ENCODE measurements at regions of chr17 and their contacts with region 1.

Region 1: DNA sequence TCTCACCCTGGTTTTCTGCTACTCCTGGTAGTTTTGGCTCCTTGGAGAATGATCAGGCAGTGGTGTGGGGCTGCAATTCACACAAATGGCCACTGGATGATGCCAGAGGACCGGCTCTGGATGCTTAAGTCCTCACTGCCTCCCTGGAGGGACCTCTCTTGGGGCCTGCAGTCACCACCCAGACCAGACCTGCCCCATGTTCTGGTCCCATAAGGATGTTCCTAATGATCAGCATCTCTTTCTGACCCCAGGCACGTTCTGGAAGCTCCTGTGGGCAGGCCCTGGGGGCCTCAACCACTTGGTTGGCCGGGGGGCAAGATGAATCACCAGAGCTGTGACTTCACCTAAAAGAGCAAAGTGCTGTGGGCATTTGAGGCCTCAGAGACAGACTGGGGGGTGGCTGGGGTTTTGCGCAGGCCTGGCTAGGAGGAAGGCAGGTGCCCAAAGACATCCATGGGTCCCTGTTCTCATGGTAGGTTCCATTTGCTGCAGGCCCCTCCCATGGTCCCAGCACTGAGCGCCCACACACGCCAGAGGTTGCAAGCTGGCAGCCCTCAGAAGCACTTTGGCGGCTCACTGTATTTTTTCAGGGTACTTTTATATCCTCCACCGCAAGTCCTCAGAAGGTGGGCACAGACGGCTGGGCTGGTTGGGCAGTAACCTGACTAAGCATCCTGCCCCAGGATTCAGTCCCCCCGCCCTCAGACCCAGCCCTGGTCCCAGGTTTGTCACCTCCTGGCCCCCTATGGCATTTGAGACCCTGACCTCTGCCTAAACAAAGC is 53.2 kb downstream of the NT5M start:
- DNase-seq: no peak
- H3K4me3 ChIP-seq: no peak overlapping the region
- H3K27ac ChIP-seq: no peak overlapping the region
- H3K4me1 ChIP-seq: peaks cover 7 to 21% (median 14%) of the 10 kb centered on the region in 4 donors
- H3K27me3 ChIP-seq: peaks cover 0 to 39% (median 2%) of the 10 kb centered on the region in 4 donors
- CTCF ChIP-seq: peak; percentile 96 to 98 (median 98)
- EP300 ChIP-seq: no peak
- POLR2A ChIP-seq: no peak

Region 2: DNA sequence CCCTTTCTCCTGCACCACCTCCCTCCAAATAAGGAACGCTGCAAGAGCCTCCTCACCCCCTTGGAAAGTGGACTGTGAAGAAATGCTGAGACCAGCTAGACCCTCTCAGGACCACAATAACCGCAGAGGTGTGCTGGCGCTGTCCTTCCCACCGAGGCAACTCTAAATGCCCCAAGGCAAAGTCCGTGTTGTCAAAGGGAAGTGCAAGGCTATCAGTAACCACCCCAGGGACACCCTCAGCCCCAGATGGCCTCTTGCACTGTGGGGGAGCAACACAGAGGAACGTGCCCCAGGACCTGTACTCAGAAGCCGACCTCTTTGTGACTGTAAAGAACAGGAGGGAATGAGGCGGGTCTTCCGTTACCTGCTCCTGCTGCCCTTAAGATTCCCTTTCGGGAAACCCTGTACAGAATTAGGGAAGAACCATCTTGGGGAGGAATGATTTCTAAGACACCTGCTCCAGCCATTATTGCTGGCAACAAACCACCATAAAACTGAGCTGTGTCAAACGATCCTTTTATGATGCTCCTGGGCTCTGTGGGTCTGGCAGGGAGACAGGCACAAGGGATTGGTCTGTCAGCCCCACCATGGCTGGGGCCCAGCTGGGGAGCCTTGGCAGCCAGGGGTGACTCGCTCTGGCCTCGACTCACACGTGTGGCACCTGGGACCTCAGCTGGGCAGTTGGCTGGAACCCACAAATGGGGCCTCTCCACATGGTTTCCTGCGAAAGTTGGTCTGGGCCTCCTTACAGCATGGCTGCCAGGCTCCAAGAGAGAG is 105.9 kb after region 1 on chr17:
- intact Hi-C with region 1: no loop called
- DNase-seq: no peak
- H3K4me3 ChIP-seq: no peak overlapping the region
- H3K27ac ChIP-seq: no peak overlapping the region
- H3K4me1 ChIP-seq: no peaks in the 10 kb centered on the region
- H3K27me3 ChIP-seq: peaks cover 0 to 23% (median 0%) of the 10 kb centered on the region in 4 donors
- CTCF ChIP-seq: no peak
- EP300 ChIP-seq: no peak
- POLR2A ChIP-seq: no peak

Region 3: GRCh38 chr17:17570140-17570797 is 213.9 kb after region 1 on chr17:
- intact Hi-C with region 1: loop called (anchors 5 kb)
- DNase-seq: no peak
- H3K4me3 ChIP-seq: no peak overlapping the region
- H3K27ac ChIP-seq: no peak overlapping the region
- H3K4me1 ChIP-seq: peaks cover 28 to 44% (median 33%) of the 10 kb centered on the region in 4 donors
- H3K27me3 ChIP-seq: no peaks in the 10 kb centered on the region
- CTCF ChIP-seq: peak; percentile 10 to 15 (median 11)
- EP300 ChIP-seq: no peak
- POLR2A ChIP-seq: no peak

Region 4: DNA sequence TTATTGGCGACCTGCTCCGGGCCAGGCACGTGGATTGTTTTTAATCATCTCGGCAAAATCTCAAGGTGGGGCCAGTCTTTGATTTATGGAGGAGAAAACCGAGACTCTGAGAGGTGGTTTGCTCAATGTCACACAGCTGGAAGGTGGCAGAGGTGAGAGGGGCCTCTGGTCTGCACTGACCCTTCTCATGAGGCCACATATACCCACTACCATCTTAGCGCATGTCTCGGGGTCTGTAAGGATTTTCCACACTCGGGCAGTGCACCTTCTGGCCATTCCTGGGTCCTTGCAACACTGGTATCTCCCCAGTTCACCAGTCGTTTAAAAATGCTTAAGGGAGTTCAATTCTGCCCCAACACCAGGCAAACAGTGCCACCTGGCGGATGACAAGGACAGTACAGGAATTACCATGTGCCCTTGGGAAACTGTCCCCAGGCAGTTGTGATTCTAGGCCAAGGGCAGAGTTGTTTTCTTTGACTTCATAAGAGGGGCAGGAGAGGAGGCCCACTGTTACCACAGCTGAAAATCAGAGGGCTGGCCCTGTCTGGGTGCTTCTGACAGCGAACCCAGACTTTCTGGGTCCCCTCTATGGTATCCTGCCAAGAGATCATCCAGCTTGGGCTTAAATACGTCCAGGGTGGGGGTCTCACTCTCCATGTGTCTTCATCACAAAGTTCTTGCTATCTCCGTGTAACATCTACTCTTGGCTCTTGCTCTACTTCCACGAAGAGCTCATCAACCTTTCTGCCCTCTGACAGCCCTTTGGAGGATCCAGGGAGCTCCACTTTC is 285.5 kb after region 1 on chr17:
- intact Hi-C with region 1: loop called (anchors 1 kb)
- DNase-seq: peak; percentile 93
- H3K4me3 ChIP-seq: no peak overlapping the region
- H3K27ac ChIP-seq: no peak overlapping the region
- H3K4me1 ChIP-seq: peaks cover 0 to 6% (median 0%) of the 10 kb centered on the region in 4 donors
- H3K27me3 ChIP-seq: peaks cover 0 to 12% (median 0%) of the 10 kb centered on the region in 4 donors
- CTCF ChIP-seq: peak; percentile 88 to 95 (median 90)
- EP300 ChIP-seq: no peak
- POLR2A ChIP-seq: no peak

Region 5: GRCh38 chr17:17702835-17703607 is 346.7 kb after region 1 on chr17:
- intact Hi-C with region 1: no loop called
- DNase-seq: no peak
- H3K4me3 ChIP-seq: no peak overlapping the region
- H3K27ac ChIP-seq: peak overlapping the region; percentile 20 to 98 (median 96)
- H3K4me1 ChIP-seq: peaks cover 62 to 85% (median 78%) of the 10 kb centered on the region in 4 donors
- H3K27me3 ChIP-seq: no peaks in the 10 kb centered on the region
- CTCF ChIP-seq: no peak
- EP300 ChIP-seq: no peak
- POLR2A ChIP-seq: no peak